ENCODE measurements at regions of chr3 and their contacts with region 1.

Region 1: GRCh38 chr3:107660306-107660976 is 137.7 kb downstream of the BBX start:
- DNase-seq: no peak
- CTCF ChIP-seq: peak; percentile 49

Region 2: DNA sequence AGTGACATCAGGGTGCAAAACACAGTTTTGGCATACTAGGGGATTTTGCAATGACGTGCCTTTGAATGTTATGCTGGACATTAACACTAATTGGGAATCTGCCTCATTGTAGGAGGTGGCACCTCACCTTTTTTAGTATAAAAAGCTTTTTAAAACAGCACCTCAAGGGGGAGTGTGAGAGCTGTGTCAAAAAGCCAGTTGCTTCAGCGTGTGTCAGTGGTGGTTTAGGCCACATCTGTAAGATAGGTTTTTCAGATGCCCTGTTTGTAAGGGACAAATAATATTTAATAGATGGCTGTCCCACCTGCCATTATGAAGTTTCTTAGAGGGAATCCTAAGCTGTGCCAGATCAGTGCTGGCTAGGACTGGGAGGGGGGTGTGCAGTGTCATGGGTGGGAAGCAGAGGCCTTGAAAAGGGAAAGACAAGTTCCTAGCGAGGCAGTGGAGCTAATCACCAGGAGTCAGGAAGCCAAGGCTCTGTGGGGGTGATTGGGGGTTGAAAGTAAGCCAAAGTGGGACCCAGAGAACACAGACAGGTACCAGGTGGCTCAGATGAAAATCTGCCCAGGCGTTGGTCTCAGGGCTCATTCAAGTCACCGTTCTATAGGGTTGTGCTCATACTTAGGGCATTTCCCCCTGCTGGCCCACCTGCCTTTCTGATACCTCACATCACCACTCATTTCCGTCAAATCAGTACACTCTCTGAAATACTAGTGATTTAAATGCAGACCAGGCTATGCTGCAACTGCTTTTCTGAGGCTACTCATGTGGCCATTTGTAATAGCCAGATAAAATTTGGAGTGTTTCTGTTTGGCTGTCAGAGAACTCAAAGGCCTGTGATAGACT is 17.2 kb before region 1 on chr3:
- CTCF ChIA-PET with region 1: interaction called, 31 read pairs
- POLR2A ChIA-PET with region 1: no interaction called
- DNase-seq: no peak
- CTCF ChIP-seq: no peak

Region 3: GRCh38 chr3:107670986-107671385 is 10.5 kb after region 1 on chr3:
- CTCF ChIA-PET with region 1: interaction called, 24 read pairs
- POLR2A ChIA-PET with region 1: interaction called, 5 read pairs
- DNase-seq: no peak
- CTCF ChIP-seq: no peak

Region 4: DNA sequence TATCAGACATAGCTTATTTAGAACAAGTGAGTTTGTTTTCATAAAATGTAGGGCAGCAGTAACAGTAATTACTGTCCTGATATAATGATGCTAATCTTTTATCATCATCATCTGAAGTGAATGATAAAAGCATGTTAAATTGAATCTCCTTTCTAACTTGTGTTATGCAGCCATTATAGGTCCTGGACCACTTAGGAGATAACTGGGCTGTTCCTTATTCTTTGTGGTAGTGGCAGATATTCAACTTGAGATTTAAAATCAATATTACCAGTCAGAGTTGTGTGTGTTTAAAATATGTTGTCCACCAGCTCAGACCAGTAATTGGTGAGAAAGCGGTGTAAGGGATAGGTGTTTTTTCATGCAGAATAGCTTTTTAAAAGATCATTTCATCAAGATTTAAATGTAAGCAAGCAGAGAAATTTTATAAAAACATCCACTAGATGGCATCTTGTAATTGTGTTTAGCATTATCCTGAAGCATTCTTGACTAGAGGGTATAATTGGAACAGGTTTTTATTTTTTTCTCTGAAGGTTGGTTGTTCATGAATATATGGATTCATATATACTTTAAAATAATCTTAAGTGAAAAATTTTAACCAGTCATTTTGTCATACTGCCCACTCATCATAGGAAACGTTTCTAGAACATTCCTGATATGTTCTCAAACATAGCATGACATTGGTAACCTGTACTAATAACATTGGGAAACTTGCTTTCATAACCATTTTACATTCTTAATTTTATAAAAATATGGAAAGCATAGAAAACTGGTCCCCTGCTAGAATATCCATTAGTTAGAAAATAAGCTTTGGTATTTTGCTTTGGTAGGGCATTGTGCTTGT is 16.2 kb after region 1 on chr3:
- CTCF ChIA-PET with region 1: interaction called, 24 read pairs
- POLR2A ChIA-PET with region 1: interaction called, 5 read pairs
- DNase-seq: no peak
- CTCF ChIP-seq: peak; percentile 24

Region 5: DNA sequence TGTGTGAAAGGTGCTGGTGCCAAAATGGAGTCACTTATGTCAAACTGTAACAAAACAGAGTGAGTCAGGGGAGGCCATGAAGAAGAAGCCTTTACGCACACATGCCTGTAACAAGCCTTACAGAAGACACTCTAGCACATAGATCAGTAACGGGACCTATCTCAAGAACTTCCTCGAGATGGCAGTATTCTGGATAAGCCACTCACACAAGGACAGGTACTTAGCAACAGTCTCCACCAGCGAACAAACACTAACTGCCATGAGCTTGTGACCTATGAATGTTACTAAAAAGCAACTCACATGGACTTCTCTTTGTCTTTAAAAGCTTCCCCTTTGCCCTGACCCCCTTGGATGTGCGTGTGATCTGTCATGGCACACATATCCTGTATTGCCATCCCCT is 195.3 kb after region 1 on chr3:
- CTCF ChIA-PET with region 1: no interaction called
- POLR2A ChIA-PET with region 1: no interaction called
- DNase-seq: no peak
- CTCF ChIP-seq: no peak

Region 6: DNA sequence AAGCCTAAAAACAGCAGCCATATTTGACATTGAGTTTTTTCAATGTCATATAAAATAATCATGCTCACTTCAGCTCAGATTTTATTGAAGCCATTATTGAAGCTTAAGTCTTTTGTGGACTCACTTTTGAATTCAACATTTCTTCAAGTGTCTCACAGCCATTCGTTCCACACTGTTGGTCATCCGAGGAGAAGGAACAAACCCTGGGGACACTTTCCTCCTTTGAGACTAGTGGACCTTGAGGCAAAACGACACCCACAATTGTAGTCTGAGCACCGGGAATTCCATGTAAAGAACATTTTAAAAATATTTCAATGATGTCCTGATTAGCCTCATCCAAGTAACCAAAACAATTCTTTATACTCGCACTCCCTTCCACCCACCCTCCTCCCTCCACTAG is 255.7 kb after region 1 on chr3:
- CTCF ChIA-PET with region 1: no interaction called
- POLR2A ChIA-PET with region 1: no interaction called
- DNase-seq: no peak
- CTCF ChIP-seq: no peak

Measured in GM10248 (cell line).